CD4-positive, alpha-beta T cell (primary cell): ENCODE measurements at regions of chr7 and their contacts with region 1.

Region 1: DNA sequence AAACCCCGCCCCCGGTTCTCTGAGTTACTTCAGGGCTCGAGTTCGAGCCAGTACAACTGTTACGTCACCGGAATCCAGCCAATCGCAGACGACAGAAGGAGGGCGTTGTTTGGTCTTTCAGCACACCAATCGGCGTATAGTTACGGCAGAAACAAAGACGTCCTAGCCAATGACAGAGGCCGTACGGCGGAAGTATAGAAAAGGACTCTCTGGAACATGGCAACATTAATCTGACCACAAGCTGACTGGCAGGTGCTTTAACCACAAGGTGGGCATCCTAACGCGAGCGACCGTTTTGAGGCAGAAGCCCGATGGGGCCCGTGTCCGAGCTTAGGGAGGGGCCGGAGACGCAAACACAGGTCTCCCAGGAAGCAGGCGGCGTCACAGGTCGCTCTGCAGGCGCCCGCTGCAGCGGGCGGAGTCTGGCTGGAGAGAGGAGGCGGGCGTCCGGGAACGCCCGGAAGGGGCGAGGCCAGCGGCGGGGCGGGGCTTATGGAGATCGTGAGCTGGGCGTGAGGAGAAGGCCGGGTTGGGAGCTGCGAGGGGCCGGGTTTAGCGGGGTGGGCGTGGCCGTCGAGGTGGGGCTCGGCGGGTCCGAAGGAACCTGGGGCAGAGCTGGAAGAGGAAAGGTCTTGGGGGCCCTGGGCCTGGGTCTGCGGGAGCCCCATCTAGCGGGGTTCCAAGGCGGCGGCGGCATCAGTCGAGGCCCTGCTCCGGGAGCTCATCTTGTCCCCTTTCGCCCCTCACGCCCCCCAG is at the start of gene MOSPD3:
- DNase-seq: peak; percentile 95 to 99 (median 98)
- ATAC-seq: peak; percentile 87
- H3K4me3 ChIP-seq: peak within 1 kb of the TSS; percentile 62
- H3K4me3 Mint-ChIP-seq: peak within 1 kb of the TSS; percentile 94
- H3K27ac ChIP-seq: peak within 1 kb of the TSS; percentile 78 to 92
- H3K27ac Mint-ChIP-seq: peak within 1 kb of the TSS; percentile 97
- H3K4me1 ChIP-seq: peaks cover 27% of the 10 kb centered on the region
- H3K4me1 Mint-ChIP-seq: peaks cover 31% of the 10 kb centered on the region
- H3K27me3 ChIP-seq: no peaks in the 10 kb centered on the region
- H3K27me3 Mint-ChIP-seq: no peaks in the 10 kb centered on the region
- CTCF ChIP-seq: no peak
- total RNA-seq, gene MOSPD3: 8.5 to 10.9 TPM

Region 2: DNA sequence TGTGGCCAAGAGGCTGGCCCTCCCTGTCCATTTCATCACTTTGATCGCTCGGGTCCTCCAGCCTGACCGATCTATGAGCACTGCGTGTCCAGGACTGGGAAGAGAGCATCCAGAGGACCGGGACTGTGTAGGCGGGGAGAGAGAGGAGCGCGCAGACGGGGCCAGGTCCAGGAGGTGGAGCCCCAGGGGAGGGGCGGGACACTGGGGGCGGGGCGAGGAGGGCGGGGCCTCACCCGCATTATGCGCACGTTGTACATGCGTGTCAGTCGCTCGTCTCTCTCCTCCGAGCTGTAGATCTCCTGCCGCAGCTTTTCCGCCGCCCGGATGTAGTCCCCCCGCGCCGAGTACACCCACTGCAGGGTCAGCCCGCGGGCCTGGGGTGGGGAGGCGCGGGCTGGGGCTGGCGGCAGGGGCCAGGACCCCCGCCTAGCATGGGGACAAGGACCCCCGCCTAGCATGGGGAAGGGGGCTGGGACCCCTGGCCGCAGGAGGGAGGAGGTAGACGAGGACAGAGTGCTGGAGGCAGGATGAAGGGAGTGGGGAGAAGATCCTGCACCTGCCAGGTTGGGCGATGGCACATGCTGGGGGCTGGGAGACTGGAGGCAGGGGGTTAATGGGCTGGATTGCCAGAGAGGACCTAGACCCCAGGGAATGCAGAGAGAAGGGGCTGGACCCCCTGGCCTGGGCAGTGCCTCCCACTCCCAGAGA is 14.5 kb after region 1 on chr7:
- CTCF ChIA-PET with region 1: interaction called, 8 read pairs
- POLR2A ChIA-PET with region 1: interaction called, 40 read pairs
- intact Hi-C with region 1: loop called (anchors 2 kb)
- DNase-seq: peak; percentile 84 to 96 (median 89)
- ATAC-seq: peak; percentile 98
- H3K4me3 ChIP-seq: peak overlapping the region; percentile 52
- H3K4me3 Mint-ChIP-seq: peak overlapping the region; percentile 78
- H3K27ac ChIP-seq: peak overlapping the region; percentile 62 to 73
- H3K27ac Mint-ChIP-seq: peak overlapping the region; percentile 62
- H3K4me1 ChIP-seq: peaks cover 36% of the 10 kb centered on the region
- H3K4me1 Mint-ChIP-seq: peaks cover 26% of the 10 kb centered on the region
- H3K27me3 ChIP-seq: no peaks in the 10 kb centered on the region
- H3K27me3 Mint-ChIP-seq: no peaks in the 10 kb centered on the region
- CTCF ChIP-seq: no peak

Region 3: GRCh38 chr7:100632951-100633717 is 21.0 kb after region 1 on chr7:
- CTCF ChIA-PET with region 1: interaction called, 19 read pairs
- POLR2A ChIA-PET with region 1: interaction called, 40 read pairs
- intact Hi-C with region 1: no loop called
- DNase-seq: peak; percentile 26 to 81 (median 47)
- ATAC-seq: peak; percentile 77
- H3K4me3 ChIP-seq: peak overlapping the region; percentile 71
- H3K4me3 Mint-ChIP-seq: peak overlapping the region; percentile 87
- H3K27ac ChIP-seq: no peak overlapping the region
- H3K27ac Mint-ChIP-seq: no peak overlapping the region
- H3K4me1 ChIP-seq: peaks cover 24% of the 10 kb centered on the region
- H3K4me1 Mint-ChIP-seq: peaks cover 10% of the 10 kb centered on the region
- H3K27me3 ChIP-seq: no peaks in the 10 kb centered on the region
- H3K27me3 Mint-ChIP-seq: no peaks in the 10 kb centered on the region
- CTCF ChIP-seq: peak; percentile 33

Region 4: DNA sequence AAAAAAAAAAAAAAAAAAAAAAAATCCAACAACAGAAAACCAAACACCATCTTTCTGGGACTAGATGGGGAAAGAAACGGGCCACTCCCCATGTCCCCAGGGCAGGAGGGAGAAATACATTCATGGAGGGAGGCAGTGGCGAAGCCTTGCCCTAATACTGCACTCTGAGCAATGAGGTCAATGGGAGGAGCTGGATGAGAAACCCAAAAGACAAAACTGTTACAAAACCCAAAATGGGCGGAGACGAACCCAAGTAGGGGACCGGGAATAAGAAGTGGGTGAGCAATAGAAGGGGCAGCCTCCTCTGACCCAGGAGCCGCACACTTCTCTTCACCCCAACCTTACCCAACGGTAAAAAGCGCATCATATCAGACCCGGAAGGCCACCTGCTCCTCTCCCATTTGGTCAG is 68.0 kb after region 1 on chr7:
- CTCF ChIA-PET with region 1: interaction called, 3 read pairs
- POLR2A ChIA-PET with region 1: interaction called, 26 read pairs
- intact Hi-C with region 1: loop called in 1 of 2 experiments (anchors 2 kb)
- DNase-seq: peak in 1 of 14 experiments; percentile 61
- ATAC-seq: no peak
- H3K4me3 ChIP-seq: no peak overlapping the region
- H3K4me3 Mint-ChIP-seq: peak overlapping the region; percentile 16
- H3K27ac ChIP-seq: peak overlapping the region; percentile 1 to 30
- H3K27ac Mint-ChIP-seq: peak overlapping the region; percentile 81
- H3K4me1 ChIP-seq: peaks cover 43% of the 10 kb centered on the region
- H3K4me1 Mint-ChIP-seq: peaks cover 46% of the 10 kb centered on the region
- H3K27me3 ChIP-seq: no peaks in the 10 kb centered on the region
- H3K27me3 Mint-ChIP-seq: no peaks in the 10 kb centered on the region
- CTCF ChIP-seq: no peak